ENCODE measurements at regions of chr19 and their contacts with region 1.

Region 1: GRCh38 chr19:51704626-51705025 is 11.5 kb downstream of the SPACA6 start:
- DNase-seq: no peak
- H3K4me3 ChIP-seq: peak overlapping the region; percentile 37
- CTCF ChIP-seq: no peak
- POLR2A ChIP-seq: no peak

Region 2: GRCh38 chr19:51615949-51616348 is 88.7 kb before region 1 on chr19:
- intact Hi-C with region 1: no loop called
- DNase-seq: no peak
- H3K4me3 ChIP-seq: no peak overlapping the region
- CTCF ChIP-seq: no peak
- POLR2A ChIP-seq: no peak

Region 3: GRCh38 chr19:51766461-51766860 is 61.8 kb after region 1 on chr19:
- intact Hi-C with region 1: loop called (anchors 5 kb)
- DNase-seq: no peak
- H3K4me3 ChIP-seq: no peak overlapping the region
- CTCF ChIP-seq: no peak
- POLR2A ChIP-seq: no peak

Measured in lower leg skin (tissue), 4 donors.